ENCODE measurements at regions of chr10 and their contacts with region 1.

Region 1: DNA sequence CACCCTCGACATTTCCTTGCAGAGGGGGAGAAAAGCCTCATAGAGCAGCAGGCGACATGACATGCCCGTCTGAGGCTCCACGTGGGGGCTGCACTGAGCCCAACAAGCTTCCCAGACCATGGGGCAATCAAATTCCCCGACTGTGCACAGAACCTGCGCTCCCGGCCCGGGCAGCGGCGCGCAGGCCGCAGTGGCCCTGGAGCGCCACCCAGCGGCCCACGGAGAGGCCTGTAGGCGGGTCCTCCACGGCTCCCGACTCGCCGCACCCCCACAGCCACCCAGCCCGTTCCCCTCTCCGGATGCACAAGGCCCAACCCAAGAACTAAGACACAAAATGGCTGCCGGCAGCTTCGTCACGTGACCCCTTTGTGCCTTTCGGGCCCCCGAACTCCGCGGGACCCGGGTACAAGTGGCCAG is 816 bp downstream of the EPC1 start:
- DNase-seq: peak; percentile 78 to 95
- H3K4me3 ChIP-seq: peak overlapping the region; percentile 96
- H3K27ac ChIP-seq: peak overlapping the region; percentile 100
- H3K4me1 ChIP-seq: peaks cover 26% of the 10 kb centered on the region
- H3K27me3 ChIP-seq: no peaks in the 10 kb centered on the region
- CTCF ChIP-seq: peak; percentile 84

Region 2: DNA sequence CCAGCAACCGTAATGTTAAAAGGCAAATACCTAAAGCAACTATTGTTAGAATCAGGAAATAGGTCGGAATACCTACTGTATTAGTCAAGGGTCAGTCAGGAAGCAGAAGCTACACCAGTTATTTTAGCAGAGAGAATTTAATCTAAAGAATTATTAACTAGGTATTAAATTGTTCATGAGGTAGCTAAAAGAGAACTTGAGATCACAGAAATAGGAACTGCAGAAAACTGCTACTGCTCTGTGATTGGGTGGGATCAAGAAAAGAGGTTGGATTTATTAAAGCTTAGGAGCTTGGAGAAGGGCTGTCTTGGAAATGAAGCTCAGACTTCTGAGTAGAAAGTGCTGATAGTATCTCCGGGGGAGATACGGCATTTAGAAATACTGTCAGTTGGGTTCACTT is 1294.4 kb before region 1 on chr10:
- CTCF ChIA-PET with region 1: no interaction called
- POLR2A ChIA-PET with region 1: no interaction called
- intact Hi-C with region 1: no loop called
- DNase-seq: peak in 1 of 2 experiments; percentile 49
- H3K4me3 ChIP-seq: no peak overlapping the region; the same call in 1 of the 2 replicates
- H3K27ac ChIP-seq: peak overlapping the region; percentile 63
- H3K4me1 ChIP-seq: peaks cover 14% of the 10 kb centered on the region
- H3K27me3 ChIP-seq: no peaks in the 10 kb centered on the region
- CTCF ChIP-seq: no peak

Region 3: DNA sequence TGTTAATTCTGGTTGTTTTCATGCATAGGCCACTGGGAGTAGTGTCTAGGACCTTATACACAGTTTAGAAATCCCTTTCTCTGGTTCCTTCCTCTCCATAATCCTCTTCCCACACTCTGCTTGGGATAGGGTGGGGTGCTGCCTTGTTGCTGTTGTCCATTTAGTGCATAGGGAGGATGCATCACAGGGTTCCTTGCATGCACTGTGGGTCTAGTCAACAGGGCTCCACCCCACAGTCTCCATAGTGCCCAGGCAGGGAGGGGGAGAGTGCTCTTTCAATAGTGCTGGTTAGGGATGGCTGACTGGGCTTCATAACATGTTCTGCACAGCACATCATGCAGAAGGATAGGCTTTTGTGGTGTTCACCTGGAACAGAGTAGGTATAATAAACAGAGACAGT is 498.6 kb before region 1 on chr10:
- CTCF ChIA-PET with region 1: no interaction called
- POLR2A ChIA-PET with region 1: no interaction called
- intact Hi-C with region 1: loop called (anchors 10 kb)
- DNase-seq: no peak
- H3K4me3 ChIP-seq: no peak overlapping the region
- H3K27ac ChIP-seq: no peak overlapping the region
- H3K4me1 ChIP-seq: no peaks in the 10 kb centered on the region
- H3K27me3 ChIP-seq: no peaks in the 10 kb centered on the region
- CTCF ChIP-seq: no peak

Region 4: GRCh38 chr10:32055813-32056600 is 290.1 kb before region 1 on chr10 and contains the start of gene KIF5B:
- CTCF ChIA-PET with region 1: no interaction called
- POLR2A ChIA-PET with region 1: interaction called, 14 read pairs
- intact Hi-C with region 1: loop called (anchors 10 kb)
- DNase-seq: peak; percentile 54 to 86
- H3K4me3 ChIP-seq: peak within 1 kb of the TSS; percentile 91
- H3K27ac ChIP-seq: peak within 1 kb of the TSS; percentile 66
- H3K4me1 ChIP-seq: peaks cover 25% of the 10 kb centered on the region
- H3K27me3 ChIP-seq: no peaks in the 10 kb centered on the region
- CTCF ChIP-seq: no peak
- total RNA-seq, gene KIF5B: 64.9 and 76.9 TPM in 2 replicates

Region 5: DNA sequence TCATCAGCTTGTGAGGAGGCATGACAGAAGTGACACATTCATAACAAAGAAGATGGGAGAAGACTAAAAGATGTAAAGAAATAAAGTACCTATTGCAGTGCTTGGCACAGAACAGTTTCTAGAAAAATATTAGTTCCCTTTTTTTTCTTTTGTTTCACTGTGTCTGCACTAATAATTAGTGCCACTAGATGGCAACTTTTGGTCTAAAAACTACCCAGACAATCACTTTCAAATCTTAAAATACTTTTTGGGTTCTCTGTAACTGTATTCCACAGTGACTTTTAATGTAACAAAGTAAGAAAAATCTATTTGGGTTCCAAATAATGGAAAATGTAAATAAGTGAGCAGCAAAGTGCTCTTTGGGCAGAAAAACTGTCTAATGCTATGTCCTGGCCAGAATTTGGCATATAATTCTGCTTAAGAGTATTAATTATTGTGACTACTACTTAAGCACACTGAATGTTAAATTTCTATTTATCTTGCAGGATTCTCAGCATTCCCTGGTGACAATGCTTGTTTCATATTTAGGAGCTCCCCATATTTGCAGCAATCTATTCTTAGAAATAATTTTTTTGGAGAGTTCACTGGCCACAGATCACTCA is 155.2 kb before region 1 on chr10:
- CTCF ChIA-PET with region 1: no interaction called
- POLR2A ChIA-PET with region 1: interaction called, 4 read pairs
- intact Hi-C with region 1: loop called (anchors 1 kb)
- DNase-seq: no peak
- H3K4me3 ChIP-seq: no peak overlapping the region
- H3K27ac ChIP-seq: no peak overlapping the region
- H3K4me1 ChIP-seq: no peaks in the 10 kb centered on the region
- H3K27me3 ChIP-seq: no peaks in the 10 kb centered on the region
- CTCF ChIP-seq: peak; percentile 76

Region 6: GRCh38 chr10:32308027-32308603 is 38.0 kb before region 1 on chr10:
- CTCF ChIA-PET with region 1: no interaction called
- POLR2A ChIA-PET with region 1: no interaction called
- intact Hi-C with region 1: no loop called
- DNase-seq: no peak
- H3K4me3 ChIP-seq: no peak overlapping the region
- H3K27ac ChIP-seq: no peak overlapping the region
- H3K4me1 ChIP-seq: no peaks in the 10 kb centered on the region
- H3K27me3 ChIP-seq: no peaks in the 10 kb centered on the region
- CTCF ChIP-seq: no peak

Region 7: GRCh38 chr10:32378363-32379317 is 32.5 kb after region 1 on chr10:
- CTCF ChIA-PET with region 1: interaction called, 3 read pairs
- POLR2A ChIA-PET with region 1: interaction called, 12 read pairs
- intact Hi-C with region 1: loop called (anchors 2 kb)
- DNase-seq: peak; percentile 68 to 84
- H3K4me3 ChIP-seq: peak overlapping the region; percentile 88
- H3K27ac ChIP-seq: peak overlapping the region; percentile 79
- H3K4me1 ChIP-seq: peaks cover 17% of the 10 kb centered on the region
- H3K27me3 ChIP-seq: no peaks in the 10 kb centered on the region
- CTCF ChIP-seq: no peak

Region 8: DNA sequence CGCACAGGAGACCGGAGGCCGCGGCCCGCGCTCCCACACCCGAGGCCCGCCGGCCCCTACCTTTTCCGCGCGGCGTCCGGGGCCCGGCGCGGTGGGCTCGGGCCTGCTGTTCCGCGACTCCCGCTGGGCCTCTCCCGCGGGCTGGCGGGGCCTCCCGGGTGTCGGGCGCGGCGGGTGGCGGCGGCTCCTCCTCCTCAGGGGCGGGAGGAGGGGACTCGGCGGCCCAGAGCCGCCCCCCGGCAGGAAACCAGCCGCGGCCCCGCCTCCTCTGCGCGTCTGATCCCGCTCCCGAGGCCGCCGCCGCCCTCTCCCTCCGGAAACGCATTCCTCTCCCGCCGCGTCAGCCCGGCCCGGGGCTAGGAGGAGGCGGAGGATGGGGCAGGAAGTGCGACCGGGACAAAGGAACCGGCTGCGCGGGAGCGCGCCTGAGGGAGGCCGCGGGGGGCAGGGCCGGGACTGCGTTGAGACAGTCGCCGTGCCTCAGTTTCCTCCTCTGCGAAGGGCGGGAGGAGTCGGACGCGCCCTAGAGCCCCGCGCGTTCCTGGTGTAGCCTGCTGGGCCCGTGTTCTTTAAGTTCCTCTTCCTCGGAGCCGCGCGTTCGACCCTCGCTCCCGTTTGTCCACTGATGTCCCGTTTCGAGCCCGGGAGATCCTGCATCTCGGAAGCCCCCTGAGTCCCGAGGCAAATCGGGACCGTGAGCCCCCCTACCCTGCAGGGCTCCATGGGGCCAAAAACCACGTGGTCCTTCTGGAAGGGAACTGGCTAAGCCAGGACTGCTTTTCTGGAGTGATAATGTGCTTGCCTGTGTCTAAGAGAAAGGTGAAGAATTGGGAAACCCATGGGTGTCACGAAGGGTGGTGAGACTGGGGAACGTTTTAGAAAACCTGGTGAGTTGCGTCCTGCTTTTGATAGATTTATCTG is 612.2 kb after region 1 on chr10 and contains the start of gene ITGB1:
- CTCF ChIA-PET with region 1: no interaction called
- POLR2A ChIA-PET with region 1: no interaction called
- intact Hi-C with region 1: loop called (anchors 10 kb)
- DNase-seq: peak; percentile 76 to 98
- H3K4me3 ChIP-seq: peak within 1 kb of the TSS; percentile 99
- H3K27ac ChIP-seq: peak within 1 kb of the TSS; percentile 95
- H3K4me1 ChIP-seq: peaks cover 65% of the 10 kb centered on the region
- H3K27me3 ChIP-seq: no peaks in the 10 kb centered on the region
- CTCF ChIP-seq: no peak
- total RNA-seq, gene ITGB1: 307 and 421 TPM in 2 replicates